Heart left ventricle (tissue), 16 donors: ENCODE measurements at regions of chr18 and their contacts with region 1.

Region 1: GRCh38 chr18:57803103-57803969 is at the start of gene ATP8B1:
- DNase-seq: peak; percentile 84 to 87 (median 86)
- ATAC-seq: peak; percentile 88 to 95 (median 91)
- H3K4me3 ChIP-seq: peak within 1 kb of the TSS; percentile 78 to 97 (median 90)
- H3K27ac ChIP-seq: peak within 1 kb of the TSS; percentile 70 to 97 (median 92)
- H3K4me1 ChIP-seq: peaks cover 0 to 65% (median 26%) of the 10 kb centered on the region in 12 donors
- H3K27me3 ChIP-seq: peaks cover 0 to 46% (median 0%) of the 10 kb centered on the region in 9 donors
- CTCF ChIP-seq: no peak
- POLR2A ChIP-seq: peak in 1 of 2 donors; percentile 76
- total RNA-seq, gene ATP8B1: 5.3 to 12.8 (median 6.5) TPM

Region 2: DNA sequence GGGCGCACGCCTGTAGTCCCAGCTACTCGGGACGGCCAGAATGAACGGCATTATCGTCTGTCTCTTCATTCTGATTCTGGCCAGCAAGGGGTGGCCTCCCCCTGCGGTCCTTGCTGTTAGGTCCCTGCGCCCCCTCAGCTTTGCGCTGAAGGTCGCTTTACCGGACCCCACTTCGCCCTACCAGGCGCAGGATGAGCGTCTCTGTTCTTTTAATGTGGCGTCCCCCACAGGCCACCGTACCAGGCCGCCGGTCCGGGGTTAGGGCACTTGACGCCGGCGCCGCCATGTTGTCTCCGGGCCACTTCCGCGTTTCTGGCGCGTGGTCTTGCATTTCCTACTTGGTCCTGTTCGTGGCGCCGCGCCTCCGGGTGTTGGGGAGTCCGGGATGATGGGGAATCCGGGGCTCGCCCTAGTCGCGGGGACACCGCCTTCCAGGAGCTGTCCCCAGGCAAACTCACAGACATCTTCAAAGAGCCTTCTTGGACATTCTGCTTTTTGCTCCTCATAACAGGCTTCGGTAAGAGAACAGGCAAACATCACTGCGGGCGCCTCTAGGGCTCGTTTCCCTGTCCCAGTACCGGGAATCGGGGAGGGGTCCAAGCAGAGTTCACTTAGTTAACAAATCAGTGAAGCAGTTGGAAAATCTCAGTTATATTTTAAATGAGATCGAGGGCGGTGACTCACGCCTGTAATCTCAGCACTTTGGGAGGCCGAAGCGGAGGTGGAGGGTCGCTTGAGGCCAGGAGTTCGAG is 173.2 kb before region 1 on chr18:
- intact Hi-C with region 1: loop called in 1 of 10 experiments (anchors 10 kb)
- DNase-seq: peak; percentile 97 to 98 (median 98)
- ATAC-seq: peak; percentile 98 to 99 (median 98)
- H3K4me3 ChIP-seq: peak overlapping the region; percentile 50 to 81 (median 70)
- H3K27ac ChIP-seq: peak overlapping the region in 11 of 12 donors; percentile 42 to 90 (median 83)
- H3K4me1 ChIP-seq: peaks cover 0 to 18% (median 9%) of the 10 kb centered on the region in 12 donors
- H3K27me3 ChIP-seq: no peaks in the 10 kb centered on the region
- CTCF ChIP-seq: peak; percentile 56 to 95 (median 70)
- POLR2A ChIP-seq: peak in 1 of 2 donors; percentile 40

Region 3: DNA sequence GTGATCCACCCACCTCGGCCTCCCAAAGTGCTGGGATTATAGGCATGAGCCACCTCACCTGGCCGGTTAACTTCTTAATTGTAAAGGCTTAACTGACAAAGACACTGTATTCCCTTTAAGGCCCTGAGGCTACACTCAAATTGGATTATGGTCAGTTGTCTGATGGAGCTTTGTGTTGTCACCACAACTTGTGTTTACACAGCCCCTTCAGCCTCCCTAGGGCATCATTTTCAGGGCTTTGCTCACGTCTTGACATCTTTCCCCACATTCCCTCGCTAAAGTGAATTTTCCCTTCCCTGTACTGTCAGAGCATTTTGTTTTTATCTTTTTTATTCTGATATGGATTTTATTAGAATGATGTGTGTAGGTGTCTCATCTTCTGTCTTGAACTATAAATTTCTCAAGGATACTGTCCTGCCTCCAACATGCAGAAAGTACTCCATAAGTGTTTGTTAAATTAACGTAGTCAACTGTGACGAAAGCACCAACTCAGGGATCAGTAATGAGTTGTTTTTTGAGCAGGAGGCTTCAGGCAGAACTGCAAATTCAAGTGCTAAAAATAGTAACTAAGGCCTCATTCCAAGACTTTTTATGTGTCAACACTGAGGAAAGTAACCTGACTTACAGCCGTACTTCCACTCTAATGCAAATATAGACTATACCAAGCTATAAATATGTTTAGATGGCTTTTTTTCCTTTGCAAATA is 104.6 kb before region 1 on chr18:
- intact Hi-C with region 1: loop called in 1 of 10 experiments (anchors 10 kb)
- DNase-seq: no peak
- ATAC-seq: peak; percentile 28 to 67 (median 65)
- H3K4me3 ChIP-seq: no peak overlapping the region
- H3K27ac ChIP-seq: peak overlapping the region in 10 of 12 donors; percentile 1 to 72 (median 36)
- H3K4me1 ChIP-seq: peaks cover 0 to 25% (median 10%) of the 10 kb centered on the region in 12 donors
- H3K27me3 ChIP-seq: no peaks in the 10 kb centered on the region
- CTCF ChIP-seq: no peak
- POLR2A ChIP-seq: no peak

Region 4: GRCh38 chr18:57748770-57749603 is 54.3 kb before region 1 on chr18:
- intact Hi-C with region 1: loop called in 1 of 10 experiments (anchors 10 kb)
- DNase-seq: no peak
- ATAC-seq: no peak
- H3K4me3 ChIP-seq: no peak overlapping the region
- H3K27ac ChIP-seq: no peak overlapping the region
- H3K4me1 ChIP-seq: peaks cover 0 to 70% (median 29%) of the 10 kb centered on the region in 12 donors
- H3K27me3 ChIP-seq: no peaks in the 10 kb centered on the region
- CTCF ChIP-seq: no peak
- POLR2A ChIP-seq: no peak

Region 5: GRCh38 chr18:57881818-57882413 is 78.6 kb after region 1 on chr18:
- intact Hi-C with region 1: no loop called
- DNase-seq: peak; percentile 35 to 65 (median 62)
- ATAC-seq: peak; percentile 77 to 94 (median 88)
- H3K4me3 ChIP-seq: no peak overlapping the region
- H3K27ac ChIP-seq: no peak overlapping the region
- H3K4me1 ChIP-seq: peaks cover 0 to 5% (median 0%) of the 10 kb centered on the region in 12 donors
- H3K27me3 ChIP-seq: no peaks in the 10 kb centered on the region
- CTCF ChIP-seq: peak; percentile 83 to 95 (median 89)
- POLR2A ChIP-seq: no peak

Region 6: GRCh38 chr18:57898506-57899124 is 95.3 kb after region 1 on chr18:
- intact Hi-C with region 1: no loop called
- DNase-seq: no peak
- ATAC-seq: peak in 3 of 4 donors; percentile 38 to 51 (median 39)
- H3K4me3 ChIP-seq: no peak overlapping the region
- H3K27ac ChIP-seq: no peak overlapping the region
- H3K4me1 ChIP-seq: no peaks in the 10 kb centered on the region
- H3K27me3 ChIP-seq: no peaks in the 10 kb centered on the region
- CTCF ChIP-seq: no peak
- POLR2A ChIP-seq: no peak